MCF 10A (cell line): ENCODE measurements at regions of chrX and their contacts with region 1.

Region 1: GRCh38 chrX:131841496-131842410 is 181.3 kb upstream of the STK26 start:
- DNase-seq: peak; percentile 71
- H3K4me3 Mint-ChIP-seq: no peak overlapping the region
- H3K27ac Mint-ChIP-seq: no peak overlapping the region
- H3K4me1 Mint-ChIP-seq: peaks cover 6% of the 10 kb centered on the region
- H3K27me3 Mint-ChIP-seq: peaks cover 55% of the 10 kb centered on the region
- CTCF ChIP-seq: peak; percentile 93

Region 2: GRCh38 chrX:131830400-131831184 is 11.2 kb before region 1 on chrX:
- CTCF ChIA-PET with region 1: interaction called, 19 read pairs
- POLR2A ChIA-PET with region 1: no interaction called
- intact Hi-C with region 1: no loop called
- DNase-seq: peak; percentile 31
- H3K4me3 Mint-ChIP-seq: no peak overlapping the region
- H3K27ac Mint-ChIP-seq: no peak overlapping the region
- H3K4me1 Mint-ChIP-seq: no peaks in the 10 kb centered on the region
- H3K27me3 Mint-ChIP-seq: peaks cover 27% of the 10 kb centered on the region
- CTCF ChIP-seq: no peak

Region 3: DNA sequence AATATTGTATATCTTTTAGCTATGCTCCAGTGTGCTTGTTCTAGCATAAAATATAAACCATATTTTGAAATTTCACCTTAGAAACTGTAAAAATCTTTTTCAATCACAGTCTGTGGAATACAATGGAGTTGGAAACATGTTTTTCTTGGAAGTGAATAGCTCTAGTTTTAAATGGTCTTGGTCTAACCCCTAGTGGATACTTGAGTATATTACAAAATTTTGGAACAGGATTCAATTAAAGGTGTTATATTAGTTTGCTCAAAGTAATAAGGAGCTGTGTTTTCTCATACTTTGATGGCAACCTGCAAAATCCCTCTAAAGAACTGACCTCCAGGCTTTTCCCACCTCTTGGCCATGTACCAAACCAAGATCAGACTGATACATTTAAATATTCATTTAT is 229.5 kb after region 1 on chrX:
- CTCF ChIA-PET with region 1: interaction called, 26 read pairs
- POLR2A ChIA-PET with region 1: interaction called, 5 read pairs
- intact Hi-C with region 1: loop called (anchors 1 kb)
- DNase-seq: peak; percentile 20
- H3K4me3 Mint-ChIP-seq: no peak overlapping the region
- H3K27ac Mint-ChIP-seq: no peak overlapping the region
- H3K4me1 Mint-ChIP-seq: no peaks in the 10 kb centered on the region
- H3K27me3 Mint-ChIP-seq: peaks cover 11% of the 10 kb centered on the region
- CTCF ChIP-seq: peak; percentile 19

Region 4: GRCh38 chrX:132219343-132219768 is 377.6 kb after region 1 on chrX and contains the start of gene RAP2C:
- CTCF ChIA-PET with region 1: interaction called, 27 read pairs
- POLR2A ChIA-PET with region 1: no interaction called
- intact Hi-C with region 1: loop called (anchors 1 kb)
- DNase-seq: peak; percentile 78
- H3K4me3 Mint-ChIP-seq: peak within 1 kb of the TSS; percentile 80
- H3K27ac Mint-ChIP-seq: peak within 1 kb of the TSS; percentile 72
- H3K4me1 Mint-ChIP-seq: peaks cover 7% of the 10 kb centered on the region
- H3K27me3 Mint-ChIP-seq: peaks cover 66% of the 10 kb centered on the region
- CTCF ChIP-seq: peak; percentile 48
- total RNA-seq, gene RAP2C: 36.3 and 37.0 TPM in 2 replicates

Region 5: GRCh38 chrX:132631579-132632232 is 790.0 kb after region 1 on chrX:
- CTCF ChIA-PET with region 1: interaction called, 10 read pairs
- POLR2A ChIA-PET with region 1: interaction called, 4 read pairs
- intact Hi-C with region 1: loop called (anchors 5 kb)
- DNase-seq: peak; percentile 33
- H3K4me3 Mint-ChIP-seq: no peak overlapping the region
- H3K27ac Mint-ChIP-seq: no peak overlapping the region
- H3K4me1 Mint-ChIP-seq: no peaks in the 10 kb centered on the region
- H3K27me3 Mint-ChIP-seq: peaks cover 63% of the 10 kb centered on the region
- CTCF ChIP-seq: peak; percentile 38